Left cardiac atrium (tissue), 4 donors: ENCODE measurements at regions of chr3 and their contacts with region 1.

Region 1: DNA sequence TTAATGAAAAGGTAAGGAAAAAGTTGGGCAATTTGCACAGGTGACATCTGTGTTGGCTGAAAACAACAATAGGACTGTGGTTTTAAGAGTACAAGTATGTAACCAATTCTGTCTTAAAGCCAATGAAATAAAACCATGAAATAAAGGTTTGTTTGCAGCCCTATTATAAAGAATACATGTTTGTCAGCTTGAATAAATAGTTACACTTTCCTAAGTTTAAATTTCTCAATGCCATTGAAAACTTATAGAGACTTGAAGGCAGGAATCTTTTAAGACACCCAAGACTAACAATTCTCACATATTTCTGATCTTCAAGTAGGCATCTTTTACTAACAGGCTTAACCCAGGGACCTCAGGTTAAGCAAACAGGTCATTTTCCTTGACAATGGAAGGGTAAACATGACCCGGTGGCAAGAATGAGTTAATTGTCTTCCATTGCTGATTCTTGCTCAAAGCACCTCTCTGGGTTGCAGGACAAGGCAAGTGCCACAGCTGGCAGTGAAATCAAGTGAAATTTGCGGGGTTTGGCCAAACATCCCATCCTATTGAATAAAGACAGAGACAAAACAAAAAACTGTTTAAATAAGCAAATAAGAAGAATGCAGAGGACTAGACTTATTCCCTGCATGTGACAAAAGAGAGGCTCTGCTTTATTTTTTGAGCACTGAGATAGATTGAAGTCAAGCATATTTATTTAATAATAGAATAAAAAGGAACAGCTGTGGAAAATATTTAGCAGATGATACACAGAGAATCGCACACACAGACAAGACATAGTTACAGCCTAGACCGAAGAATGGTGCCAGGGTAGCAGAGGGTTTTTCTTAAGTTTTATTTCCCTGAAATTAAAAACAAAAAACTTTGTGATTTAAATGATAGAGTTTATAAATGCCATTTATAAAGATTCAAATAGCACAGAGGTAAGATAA is 56.1 kb upstream of the MITF start:
- DNase-seq: no peak
- ATAC-seq: no peak

Region 2: GRCh38 chr3:69855436-69856162 is 172.5 kb after region 1 on chr3:
- intact Hi-C with region 1: loop called in 1 of 2 experiments (anchors 10 kb)
- DNase-seq: no peak
- ATAC-seq: peak; percentile 62 to 70